Right cardiac atrium (tissue), 5 donors: ENCODE measurements at regions of chr7 and their contacts with region 1.

Region 1: GRCh38 chr7:25389489-25390106 is 161.3 kb upstream of the NPVF start:
- DNase-seq: peak in 1 of 3 donors; percentile 45
- ATAC-seq: peak in 1 of 2 donors; percentile 41
- H3K4me3 ChIP-seq: no peak overlapping the region
- H3K27ac ChIP-seq: no peak overlapping the region
- H3K4me1 ChIP-seq: peaks cover 2% of the 10 kb centered on the region
- H3K27me3 ChIP-seq: no peaks in the 10 kb centered on the region

Region 2: GRCh38 chr7:25565949-25566348 is 176.4 kb after region 1 on chr7:
- intact Hi-C with region 1: loop called in 3 of 4 experiments (anchors 2 to 5 kb)
- DNase-seq: peak; percentile 29 to 81 (median 68)
- ATAC-seq: no peak
- H3K4me3 ChIP-seq: no peak overlapping the region
- H3K27ac ChIP-seq: no peak overlapping the region
- H3K4me1 ChIP-seq: peaks cover 2% of the 10 kb centered on the region
- H3K27me3 ChIP-seq: no peaks in the 10 kb centered on the region